Caco-2 (cell line): ENCODE measurements at regions of chr18 and their contacts with region 1.

Region 1: DNA sequence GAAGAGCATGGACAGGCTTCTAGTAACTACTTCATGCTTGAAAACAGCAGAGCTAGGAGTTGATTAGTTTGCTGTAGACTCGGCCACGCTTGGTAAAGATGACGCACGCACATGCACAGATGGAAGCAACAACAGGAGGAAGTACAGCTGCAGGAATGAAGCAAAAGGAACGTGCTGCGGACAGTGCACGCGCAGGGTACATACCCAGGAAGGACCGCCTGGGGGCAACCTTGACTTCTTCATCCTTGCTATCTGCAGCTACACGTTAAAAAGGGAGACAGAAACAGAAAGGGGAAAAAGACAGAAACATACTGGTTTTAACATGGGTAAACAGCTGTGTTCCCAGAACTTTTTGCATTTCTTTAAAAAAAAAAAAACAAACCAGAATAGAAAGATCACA is 17.7 kb downstream of the SLC66A2 start:
- DNase-seq: peak in 1 of 2 experiments; percentile 12
- H3K4me3 ChIP-seq: no peak overlapping the region
- H3K4me3 Mint-ChIP-seq: no peak overlapping the region
- H3K27ac Mint-ChIP-seq: no peak overlapping the region
- H3K4me1 ChIP-seq: peaks cover 6% of the 10 kb centered on the region
- H3K4me1 Mint-ChIP-seq: peaks cover 7% of the 10 kb centered on the region
- H3K27me3 ChIP-seq: no peaks in the 10 kb centered on the region
- H3K27me3 Mint-ChIP-seq: no peaks in the 10 kb centered on the region
- CTCF ChIP-seq: peak in 1 of 2 experiments; percentile 5

Region 2: DNA sequence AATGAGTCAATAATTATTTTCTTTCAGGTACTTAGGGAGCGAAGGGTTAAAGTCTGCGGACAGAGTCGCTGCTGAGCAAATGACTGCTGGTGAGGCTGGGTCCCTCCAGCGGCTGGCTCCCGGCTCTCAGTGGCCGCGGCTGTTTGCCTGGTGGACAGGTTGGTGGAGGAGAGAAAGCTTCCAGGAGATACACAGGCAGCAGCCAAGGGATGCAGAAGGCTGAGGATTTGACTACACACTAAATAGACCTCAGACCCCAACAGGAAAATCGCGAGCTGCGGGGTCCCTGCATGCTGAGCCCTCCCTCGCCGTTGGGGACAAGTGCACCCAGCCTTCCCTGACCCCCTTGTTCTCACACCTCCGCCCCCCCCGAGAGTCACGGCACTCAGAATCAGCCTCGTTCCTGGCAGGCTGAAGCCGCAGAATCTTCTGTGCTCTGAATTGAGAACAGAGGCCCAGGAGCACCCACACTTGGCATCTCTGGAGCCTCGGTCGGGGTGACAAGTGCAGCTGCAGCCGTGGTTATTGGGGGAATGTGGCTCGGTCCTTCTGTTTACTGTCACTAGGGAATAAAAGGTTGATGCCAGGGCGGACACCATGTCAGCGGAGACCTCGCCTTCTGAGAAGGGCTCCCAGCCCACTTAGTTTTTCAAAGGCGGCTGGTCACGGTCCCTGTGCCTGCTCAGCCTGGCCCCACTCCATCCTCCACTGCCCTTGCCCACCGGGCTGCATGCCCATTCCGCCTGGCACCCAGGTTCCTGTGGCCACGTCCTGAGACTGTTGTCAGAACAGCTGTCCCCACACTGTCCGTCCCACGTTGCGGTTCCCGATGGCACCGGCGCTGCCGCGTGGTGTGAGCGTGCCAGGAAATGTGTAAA is 56.3 kb before region 1 on chr18:
- CTCF ChIA-PET with region 1: no interaction called
- POLR2A ChIA-PET with region 1: no interaction called
- intact Hi-C with region 1: no loop called
- DNase-seq: peak in 1 of 2 experiments; percentile 30
- H3K4me3 ChIP-seq: no peak overlapping the region
- H3K4me3 Mint-ChIP-seq: no peak overlapping the region
- H3K27ac Mint-ChIP-seq: no peak overlapping the region
- H3K4me1 ChIP-seq: no peaks in the 10 kb centered on the region
- H3K4me1 Mint-ChIP-seq: no peaks in the 10 kb centered on the region
- H3K27me3 ChIP-seq: no peaks in the 10 kb centered on the region
- H3K27me3 Mint-ChIP-seq: no peaks in the 10 kb centered on the region
- CTCF ChIP-seq: peak in 1 of 2 experiments; percentile 6

Region 3: DNA sequence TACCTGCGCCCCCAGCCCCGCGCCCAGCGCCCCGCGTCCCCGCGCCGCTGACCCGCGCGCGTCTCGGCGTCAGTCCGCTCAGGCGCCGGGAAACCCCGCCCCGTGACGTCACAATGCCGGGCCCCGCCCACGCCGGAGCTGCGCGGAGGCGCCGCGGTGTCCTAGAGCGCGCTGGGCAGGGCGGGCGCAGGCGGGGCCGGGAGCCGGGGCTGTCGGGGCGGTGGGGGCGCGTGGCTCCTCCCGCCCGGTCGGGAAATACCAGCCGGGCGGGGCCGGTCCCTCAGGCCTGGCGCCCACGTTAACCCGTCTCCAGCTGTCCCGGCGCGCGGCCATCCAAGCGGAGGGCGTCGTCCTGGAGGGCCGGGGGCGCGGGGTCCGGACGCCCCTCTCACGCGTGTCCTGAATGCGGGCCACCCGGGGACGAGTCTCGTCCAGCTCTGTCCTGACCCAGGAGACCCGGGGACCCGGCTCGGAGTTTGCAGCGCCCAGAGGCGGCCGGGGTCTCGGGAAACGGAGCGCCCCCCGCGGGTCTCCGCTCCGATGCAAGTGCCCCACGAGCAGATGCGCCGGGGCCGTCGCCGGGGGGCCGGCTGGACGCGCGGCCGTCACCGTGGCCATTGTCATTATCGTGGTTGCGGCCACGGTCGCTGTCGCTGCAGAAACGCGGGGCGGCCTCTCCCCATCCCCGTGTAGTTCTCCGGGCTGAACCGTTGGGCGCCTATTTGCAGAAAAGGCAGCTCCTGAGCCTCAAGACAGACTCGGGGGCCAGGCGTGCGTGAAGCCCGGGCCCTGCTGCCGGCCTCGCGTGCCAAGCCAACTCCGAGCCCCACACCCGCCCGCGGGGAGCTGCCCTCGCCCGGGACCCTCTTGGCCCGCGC is 18.1 kb after region 1 on chr18 and contains the start of gene SLC66A2:
- CTCF ChIA-PET with region 1: no interaction called
- POLR2A ChIA-PET with region 1: no interaction called
- intact Hi-C with region 1: loop called (anchors 2 kb)
- DNase-seq: peak; percentile 79 to 88
- H3K4me3 ChIP-seq: peak within 1 kb of the TSS; percentile 62
- H3K4me3 Mint-ChIP-seq: peak within 1 kb of the TSS; percentile 65
- H3K27ac Mint-ChIP-seq: no peak within 1 kb of the TSS
- H3K4me1 ChIP-seq: no peaks in the 10 kb centered on the region
- H3K4me1 Mint-ChIP-seq: no peaks in the 10 kb centered on the region
- H3K27me3 ChIP-seq: no peaks in the 10 kb centered on the region
- H3K27me3 Mint-ChIP-seq: no peaks in the 10 kb centered on the region
- CTCF ChIP-seq: no peak
- total RNA-seq, gene SLC66A2: 18.8 and 19.5 TPM in 2 replicates